Posterior cingulate gyrus (tissue), 11 donors: ENCODE measurements at regions of chr1 and their contacts with region 1.

Region 1: DNA sequence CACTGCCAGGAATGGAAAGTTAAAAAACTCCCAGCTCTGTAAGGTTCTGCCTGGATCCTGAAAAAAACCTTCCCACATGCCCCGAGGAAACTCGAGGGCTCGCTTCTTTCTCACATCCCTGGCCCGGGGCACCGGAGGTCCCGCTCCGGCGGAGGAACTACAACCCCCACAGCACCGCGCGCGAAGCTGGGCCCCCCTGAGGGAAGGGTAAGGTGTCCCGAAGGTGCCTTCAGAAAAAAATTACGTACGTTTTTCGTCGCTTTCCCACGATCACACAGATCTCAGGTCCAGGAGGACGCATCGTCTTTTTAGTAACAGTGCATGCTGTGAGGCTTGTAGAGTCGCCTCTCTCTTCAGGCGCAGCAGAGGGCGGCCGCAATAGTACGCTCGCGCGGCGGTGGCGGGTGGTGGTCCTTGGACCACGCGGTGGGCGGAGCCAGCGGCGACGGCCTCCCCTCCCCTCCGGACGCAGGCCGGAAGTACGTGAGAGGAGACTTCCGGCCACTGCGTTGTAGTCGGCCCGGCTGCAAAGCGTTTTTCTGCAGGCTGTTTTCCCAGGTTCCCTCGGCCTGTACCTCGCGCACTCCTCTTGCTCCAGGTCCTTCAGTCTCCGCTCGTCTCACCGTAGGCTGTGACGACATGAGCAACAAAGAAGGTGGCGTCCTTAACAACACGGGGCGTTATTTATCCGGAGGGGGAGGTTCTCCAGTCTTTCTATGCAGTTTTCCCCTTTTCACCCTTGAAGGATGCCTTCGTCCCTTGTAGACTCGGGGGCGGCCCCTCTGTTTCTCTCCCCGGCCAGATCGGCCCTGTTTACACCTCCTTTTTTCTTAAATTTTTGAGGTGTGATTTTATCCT is at the start of gene TSNAX:
- DNase-seq: peak; percentile 77 to 98 (median 87)

Region 2: DNA sequence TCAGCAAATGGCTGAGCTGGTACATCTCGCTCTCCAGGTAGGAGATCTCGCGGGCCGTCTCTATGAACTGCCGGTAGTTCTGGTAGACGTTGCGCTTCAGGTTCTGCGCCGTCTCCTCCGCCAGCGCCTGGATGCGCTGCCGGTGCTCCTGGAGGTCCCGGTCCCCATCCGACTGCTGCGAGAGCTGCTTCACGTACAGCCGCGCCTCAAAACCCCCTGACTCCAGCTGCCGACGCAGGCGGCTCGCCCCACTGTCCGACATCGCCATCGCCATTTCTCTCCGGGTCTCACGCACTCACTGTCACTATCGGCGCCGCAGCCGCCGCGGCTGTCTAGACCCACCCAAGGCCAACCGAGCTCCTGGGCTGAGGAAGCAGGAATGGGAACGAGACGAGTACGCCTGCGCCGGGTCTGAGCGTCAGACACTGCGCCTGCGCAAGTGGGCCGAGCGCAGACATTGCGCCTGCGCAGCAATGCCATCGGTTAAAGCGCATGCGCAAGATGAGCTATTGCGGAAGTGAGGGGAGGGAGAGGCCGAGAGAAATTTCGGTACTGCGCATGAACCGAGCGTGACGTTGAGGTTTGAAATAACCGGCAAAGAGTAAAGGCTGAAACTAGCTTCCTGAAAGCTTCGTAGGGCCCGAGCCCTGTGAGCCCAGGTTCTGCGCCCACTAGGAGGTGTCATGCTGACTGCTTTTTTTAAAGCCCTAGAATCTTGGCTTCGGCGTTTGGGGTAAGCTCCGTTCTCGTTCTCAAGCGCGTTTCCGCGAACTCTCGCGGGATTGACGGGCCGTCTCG is 190.7 kb before region 1 on chr1 and contains the start of gene EXOC8:
- intact Hi-C with region 1: loop called (anchors 1 kb)
- DNase-seq: peak; percentile 89 to 99 (median 94)

Region 3: DNA sequence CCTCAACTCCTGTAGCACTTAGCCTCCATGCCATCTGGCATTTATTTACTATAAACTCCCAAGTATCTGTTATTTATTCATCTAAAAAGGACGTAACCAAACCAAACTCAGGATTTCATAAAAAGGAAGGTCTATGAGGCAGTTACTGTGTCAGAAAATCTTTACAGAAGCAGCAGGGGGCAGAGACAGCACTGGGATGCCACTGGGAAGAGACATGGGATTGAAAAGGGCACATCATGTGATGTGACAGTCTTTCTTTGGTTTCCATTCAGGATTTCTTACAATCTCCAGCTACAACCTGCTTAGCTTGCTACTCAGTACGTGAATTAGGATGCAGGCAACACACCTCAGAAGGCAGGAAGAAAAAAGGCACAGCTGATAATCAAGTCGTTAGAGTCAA is 159.1 kb before region 1 on chr1:
- intact Hi-C with region 1: loop called (anchors 10 kb)
- DNase-seq: peak in 2 of 10 donors; percentile 17 to 44

Region 4: GRCh38 chr1:231421993-231422764 is 106.2 kb before region 1 on chr1 and contains the start of gene EGLN1:
- intact Hi-C with region 1: loop called (anchors 5 kb)
- DNase-seq: peak; percentile 60 to 96 (median 76)